ENCODE measurements at regions of chrX and their contacts with region 1.

Region 1: DNA sequence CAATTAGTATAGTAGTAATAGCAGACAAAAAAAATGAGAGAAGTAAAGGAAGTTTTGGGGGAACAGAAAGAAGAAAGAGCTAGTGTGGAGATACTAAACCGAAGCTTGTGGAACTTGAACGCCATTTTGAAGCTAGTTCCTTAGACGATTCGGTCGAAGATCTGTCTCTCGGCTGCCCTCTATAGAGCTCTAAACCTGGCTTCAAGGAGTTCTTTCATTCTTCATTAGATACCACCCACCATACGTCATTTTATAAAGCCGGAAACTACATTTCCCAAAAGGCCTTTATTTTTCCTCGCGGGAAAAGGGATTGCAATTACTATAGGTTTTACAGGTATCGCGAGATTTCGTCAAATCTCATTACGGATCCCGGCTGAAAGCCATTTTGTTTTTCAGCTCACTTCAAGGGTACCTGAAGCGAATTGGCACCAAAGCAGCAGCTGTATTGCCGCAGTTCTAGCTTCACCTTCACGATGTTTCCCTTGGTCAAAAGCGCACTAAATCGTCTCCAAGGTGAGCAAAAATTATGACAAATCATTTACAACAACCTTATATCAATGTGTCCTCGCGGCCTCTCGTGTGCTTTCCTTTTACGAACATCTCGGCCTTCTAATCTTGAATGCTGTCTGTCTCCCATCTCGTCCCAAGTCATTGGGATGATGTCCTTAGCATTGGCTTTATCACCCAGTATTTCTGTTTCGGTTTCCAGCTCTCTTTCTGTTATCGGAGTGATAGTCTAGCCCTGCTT is at the start of gene COX7B:
- DNase-seq: peak; percentile 94
- H3K4me3 ChIP-seq: peak within 1 kb of the TSS; percentile 48 to 88 (median 62)
- H3K27ac ChIP-seq: peak within 1 kb of the TSS; percentile 75
- H3K4me1 ChIP-seq: peaks cover 6% of the 10 kb centered on the region
- H3K27me3 ChIP-seq: no peaks in the 10 kb centered on the region
- CTCF ChIP-seq: peak; percentile 34 to 46
- POLR2A ChIP-seq: peak; percentile 75
- total RNA-seq, gene COX7B: 229 and 230 TPM in 2 replicates

Region 2: DNA sequence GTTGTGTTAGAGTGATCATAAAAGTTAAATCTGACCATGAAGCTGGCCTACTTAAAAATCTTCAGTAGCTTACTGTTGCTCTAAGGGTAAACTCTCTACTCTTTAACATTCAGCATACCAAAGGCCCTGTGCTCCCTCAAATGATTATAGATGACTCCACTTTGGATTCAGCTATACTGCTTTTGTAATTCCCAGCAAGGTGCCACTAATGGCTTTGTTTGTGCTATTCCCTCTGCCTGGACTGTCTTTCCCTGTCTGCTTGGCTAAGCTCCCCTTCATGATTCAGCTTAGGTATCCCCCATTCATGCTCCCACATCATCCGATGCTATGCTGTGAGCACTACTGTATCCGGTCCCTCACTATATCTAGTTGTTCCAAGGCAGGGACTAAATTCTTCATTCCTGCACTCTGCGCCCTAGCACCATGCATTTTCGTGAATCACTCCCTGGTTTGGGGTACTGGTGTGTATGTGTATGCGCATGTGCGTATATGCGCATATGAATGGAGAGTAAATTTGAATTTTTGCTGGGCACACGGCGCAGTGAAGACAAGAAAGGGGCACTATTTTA is 1726.8 kb before region 1 on chrX:
- CTCF ChIA-PET with region 1: no interaction called
- POLR2A ChIA-PET with region 1: no interaction called
- dilution Hi-C with region 1: no loop called
- intact Hi-C with region 1: loop called (anchors 5 kb)
- DNase-seq: no peak
- H3K4me3 ChIP-seq: peak overlapping the region; percentile 11 to 85 (median 79)
- H3K27ac ChIP-seq: peak overlapping the region; percentile 20
- H3K4me1 ChIP-seq: peaks cover 15% of the 10 kb centered on the region
- H3K27me3 ChIP-seq: no peaks in the 10 kb centered on the region
- CTCF ChIP-seq: no peak
- POLR2A ChIP-seq: no peak

Region 3: DNA sequence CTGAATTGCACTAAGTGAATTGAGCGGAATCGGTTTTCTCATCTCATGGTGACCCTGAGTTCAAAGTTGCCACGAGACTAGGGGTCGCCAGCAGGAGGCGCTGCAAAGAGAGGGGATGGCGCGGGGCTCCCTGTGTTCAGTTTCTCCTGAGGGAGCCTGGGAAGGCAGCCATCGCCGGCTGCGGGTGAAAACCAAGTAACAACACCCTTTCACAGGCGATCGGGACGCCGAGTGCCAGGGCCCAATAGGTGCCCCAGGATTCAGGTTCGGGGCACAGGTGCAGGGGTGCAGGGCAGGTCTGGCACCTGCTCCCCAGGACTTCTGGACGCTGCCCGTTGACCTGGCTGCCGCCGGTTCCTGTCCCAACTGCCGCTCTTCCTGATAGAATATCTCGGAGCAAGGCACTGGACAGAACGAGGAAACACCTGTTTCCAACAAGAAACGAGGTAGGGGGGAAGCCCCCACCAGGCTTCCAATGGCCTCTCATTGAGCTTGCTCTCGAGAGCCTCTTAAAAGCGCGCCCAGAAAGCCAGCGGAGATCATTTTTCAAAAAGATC is 453.1 kb before region 1 on chrX:
- CTCF ChIA-PET with region 1: no interaction called
- POLR2A ChIA-PET with region 1: interaction called, 3 read pairs
- dilution Hi-C with region 1: no loop called
- intact Hi-C with region 1: loop called (anchors 5 kb)
- DNase-seq: peak; percentile 86
- H3K4me3 ChIP-seq: peak overlapping the region in 1 of 3 experiments; percentile 0
- H3K27ac ChIP-seq: peak overlapping the region; percentile 62
- H3K4me1 ChIP-seq: peaks cover 79% of the 10 kb centered on the region
- H3K27me3 ChIP-seq: no peaks in the 10 kb centered on the region
- CTCF ChIP-seq: peak; percentile 26 to 53
- POLR2A ChIP-seq: no peak

Region 4: GRCh38 chrX:77910108-77910840 is 11.0 kb after region 1 on chrX and contains the start of gene ATP7A:
- CTCF ChIA-PET with region 1: interaction called, 22 read pairs
- POLR2A ChIA-PET with region 1: interaction called, 7 read pairs
- dilution Hi-C with region 1: no loop called
- intact Hi-C with region 1: no loop called
- DNase-seq: peak; percentile 87
- H3K4me3 ChIP-seq: peak within 1 kb of the TSS; percentile 49 to 98 (median 80)
- H3K27ac ChIP-seq: peak within 1 kb of the TSS; percentile 78
- H3K4me1 ChIP-seq: peaks cover 6% of the 10 kb centered on the region
- H3K27me3 ChIP-seq: no peaks in the 10 kb centered on the region
- CTCF ChIP-seq: peak; percentile 49 to 69
- POLR2A ChIP-seq: no peak
- total RNA-seq, gene ATP7A: 8.7 and 8.8 TPM in 2 replicates

Region 5: DNA sequence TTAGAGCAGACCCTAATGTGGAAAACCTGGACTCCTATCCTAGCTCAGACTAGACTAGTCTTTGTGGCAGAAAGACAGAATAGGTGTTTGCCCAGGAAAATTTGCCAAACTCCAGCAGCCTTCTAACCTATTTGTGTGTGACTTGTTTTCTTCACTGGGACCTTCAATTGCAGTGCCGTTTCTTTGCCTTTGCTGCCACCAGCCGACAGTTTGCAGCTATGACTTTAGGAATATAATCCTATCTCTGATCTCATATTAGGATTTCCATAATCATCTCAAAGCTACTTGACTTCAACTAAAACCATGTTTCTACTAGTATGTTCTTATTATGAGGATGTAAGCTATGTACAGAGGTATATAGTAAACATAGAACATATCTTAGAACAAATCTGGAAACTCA is 130.4 kb after region 1 on chrX:
- CTCF ChIA-PET with region 1: interaction called, 12 read pairs
- POLR2A ChIA-PET with region 1: no interaction called
- dilution Hi-C with region 1: no loop called
- intact Hi-C with region 1: loop called (anchors 5 kb)
- DNase-seq: peak; percentile 32
- H3K4me3 ChIP-seq: no peak overlapping the region
- H3K27ac ChIP-seq: no peak overlapping the region
- H3K4me1 ChIP-seq: no peaks in the 10 kb centered on the region
- H3K27me3 ChIP-seq: no peaks in the 10 kb centered on the region
- CTCF ChIP-seq: peak; percentile 22 to 36
- POLR2A ChIP-seq: no peak

Region 6: GRCh38 chrX:78116766-78117165 is 217.5 kb after region 1 on chrX:
- CTCF ChIA-PET with region 1: no interaction called
- POLR2A ChIA-PET with region 1: no interaction called
- dilution Hi-C with region 1: no loop called
- intact Hi-C with region 1: no loop called
- DNase-seq: no peak
- H3K4me3 ChIP-seq: no peak overlapping the region
- H3K27ac ChIP-seq: no peak overlapping the region
- H3K4me1 ChIP-seq: no peaks in the 10 kb centered on the region
- H3K27me3 ChIP-seq: no peaks in the 10 kb centered on the region
- CTCF ChIP-seq: no peak
- POLR2A ChIP-seq: no peak

Measured in endothelial cell of umbilical vein (primary cell).